Activated naive CD4-positive, alpha-beta T cell treated with anti-CD3 and anti-CD28 coated beads for 36 hours (primary cell): ENCODE measurements at regions of chr17 and their contacts with region 1.

Region 1: GRCh38 chr17:7484067-7484918 is at the start of gene POLR2A:
- DNase-seq: peak; percentile 95
- H3K4me3 Mint-ChIP-seq: peak within 1 kb of the TSS; percentile 93
- H3K27ac Mint-ChIP-seq: peak within 1 kb of the TSS; percentile 100
- H3K4me1 Mint-ChIP-seq: peaks cover 70% of the 10 kb centered on the region
- H3K27me3 Mint-ChIP-seq: no peaks in the 10 kb centered on the region
- total RNA-seq, gene POLR2A: 204 to 205 TPM

Region 2: DNA sequence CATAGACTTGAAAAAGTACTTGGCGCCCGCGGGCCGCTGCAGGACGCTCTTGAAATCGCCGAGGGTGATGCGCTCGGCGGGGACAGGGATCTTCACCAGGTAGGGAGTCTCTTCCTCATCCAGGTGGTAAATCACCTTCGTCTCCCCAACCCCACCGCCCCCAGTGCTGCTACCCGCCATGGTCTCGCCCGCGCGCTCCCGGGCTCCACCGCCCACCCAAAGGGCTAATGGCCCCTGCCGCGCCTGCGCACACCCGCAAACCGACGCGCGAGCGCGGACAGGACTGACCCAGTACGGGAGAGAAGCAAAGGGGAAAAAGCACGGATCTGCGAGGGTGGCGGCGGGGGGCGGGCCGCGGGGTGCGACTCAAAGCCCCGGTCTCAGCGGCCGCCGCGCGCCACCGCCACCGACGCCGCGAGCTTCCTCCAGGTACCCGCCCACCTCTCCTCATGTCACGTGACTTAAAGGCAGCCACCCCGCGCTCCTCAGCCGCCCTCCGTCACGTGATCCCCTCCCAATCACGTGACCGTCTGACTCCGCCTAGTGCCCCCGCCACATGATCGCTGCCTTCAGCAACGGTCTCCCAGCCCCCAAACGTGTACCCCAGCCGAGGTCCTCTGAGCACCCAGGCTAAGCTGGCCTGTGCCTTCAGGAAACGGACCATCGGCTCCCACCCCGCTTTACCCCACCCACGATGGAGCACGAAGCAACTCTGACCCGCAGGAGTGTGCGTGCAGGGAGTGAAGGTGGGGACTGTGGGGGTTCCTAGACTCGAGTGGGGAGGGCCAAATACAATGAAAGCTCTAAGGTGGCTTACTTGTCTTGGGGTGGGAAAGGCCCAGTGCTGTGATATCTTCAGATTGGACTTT is 250.0 kb before region 1 on chr17 and contains the start of gene DVL2:
- CTCF ChIA-PET with region 1: no interaction called
- intact Hi-C with region 1: loop called (anchors 2 kb)
- DNase-seq: peak; percentile 96
- H3K4me3 Mint-ChIP-seq: peak within 1 kb of the TSS; percentile 90
- H3K27ac Mint-ChIP-seq: peak within 1 kb of the TSS; percentile 88
- H3K4me1 Mint-ChIP-seq: peaks cover 52% of the 10 kb centered on the region
- H3K27me3 Mint-ChIP-seq: no peaks in the 10 kb centered on the region
- total RNA-seq, gene DVL2: 26.7 to 29.4 TPM

Region 3: DNA sequence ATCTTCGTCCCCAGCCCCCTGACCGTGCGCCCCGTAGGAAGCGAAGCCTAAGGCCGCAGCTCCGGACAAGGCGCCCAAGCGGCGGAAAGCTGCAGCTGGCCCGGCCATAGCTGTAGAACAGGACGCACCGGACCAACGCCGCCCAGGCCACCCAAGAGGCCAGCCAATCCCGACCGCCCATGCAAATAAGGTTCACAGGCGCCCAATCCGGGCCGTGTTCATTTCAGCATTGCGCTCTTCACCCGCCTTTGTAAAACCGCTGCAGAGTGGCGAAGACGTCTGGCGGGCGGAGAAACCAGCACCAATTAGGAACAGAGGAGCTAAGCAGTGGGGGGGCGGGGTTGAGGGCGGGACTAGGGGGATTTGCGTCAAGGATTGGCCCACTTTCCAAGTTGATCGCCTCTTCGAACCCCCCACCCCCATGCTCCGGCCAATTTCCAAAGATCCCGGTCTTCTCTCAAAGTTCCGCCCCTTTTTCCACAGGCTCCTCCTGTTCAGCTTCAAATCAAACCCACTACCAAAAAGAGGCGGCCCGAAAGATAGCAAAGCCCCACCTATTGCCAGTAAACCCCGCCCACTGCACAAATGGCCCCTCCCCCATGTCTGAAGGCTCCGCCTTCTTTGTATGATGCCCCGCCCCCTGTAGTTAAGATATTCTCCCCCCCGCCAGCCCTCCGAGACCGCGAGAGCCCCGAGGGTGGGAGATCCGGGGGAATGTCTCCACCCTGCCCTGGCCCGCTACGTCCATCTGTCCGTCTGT is 80.1 kb before region 1 on chr17 and contains the start of gene TMEM256:
- CTCF ChIA-PET with region 1: no interaction called
- intact Hi-C with region 1: loop called (anchors 1 kb)
- DNase-seq: peak; percentile 99
- H3K4me3 Mint-ChIP-seq: peak within 1 kb of the TSS; percentile 93
- H3K27ac Mint-ChIP-seq: peak within 1 kb of the TSS; percentile 93
- H3K4me1 Mint-ChIP-seq: peaks cover 19% of the 10 kb centered on the region
- H3K27me3 Mint-ChIP-seq: peaks cover 2% of the 10 kb centered on the region
- total RNA-seq, gene TMEM256: 65.6 to 66.3 TPM

Region 4: DNA sequence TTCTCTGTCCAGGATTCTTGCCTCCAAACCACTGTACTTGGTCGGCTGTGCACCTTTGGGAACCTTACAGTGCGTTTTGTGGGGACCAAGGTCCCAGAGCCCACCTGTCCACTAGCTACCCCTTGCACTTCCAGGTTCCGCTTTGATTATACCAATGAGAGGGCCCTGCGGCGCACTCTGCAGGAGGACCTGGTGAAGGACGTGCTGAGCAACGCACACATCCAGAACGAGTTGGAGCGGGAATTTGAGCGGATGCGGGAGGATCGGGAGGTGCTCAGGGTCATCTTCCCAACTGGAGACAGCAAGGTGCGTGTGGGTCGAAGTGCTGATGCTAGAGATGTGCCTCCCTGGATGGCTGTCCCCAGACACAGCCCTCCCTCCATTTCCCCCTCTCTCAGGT is 18.7 kb after region 1 on chr17:
- CTCF ChIA-PET with region 1: interaction called, 4 read pairs
- intact Hi-C with region 1: loop called (anchors 2 kb)
- DNase-seq: peak; percentile 19
- H3K4me3 Mint-ChIP-seq: no peak overlapping the region
- H3K27ac Mint-ChIP-seq: no peak overlapping the region
- H3K4me1 Mint-ChIP-seq: no peaks in the 10 kb centered on the region
- H3K27me3 Mint-ChIP-seq: no peaks in the 10 kb centered on the region

Region 5: DNA sequence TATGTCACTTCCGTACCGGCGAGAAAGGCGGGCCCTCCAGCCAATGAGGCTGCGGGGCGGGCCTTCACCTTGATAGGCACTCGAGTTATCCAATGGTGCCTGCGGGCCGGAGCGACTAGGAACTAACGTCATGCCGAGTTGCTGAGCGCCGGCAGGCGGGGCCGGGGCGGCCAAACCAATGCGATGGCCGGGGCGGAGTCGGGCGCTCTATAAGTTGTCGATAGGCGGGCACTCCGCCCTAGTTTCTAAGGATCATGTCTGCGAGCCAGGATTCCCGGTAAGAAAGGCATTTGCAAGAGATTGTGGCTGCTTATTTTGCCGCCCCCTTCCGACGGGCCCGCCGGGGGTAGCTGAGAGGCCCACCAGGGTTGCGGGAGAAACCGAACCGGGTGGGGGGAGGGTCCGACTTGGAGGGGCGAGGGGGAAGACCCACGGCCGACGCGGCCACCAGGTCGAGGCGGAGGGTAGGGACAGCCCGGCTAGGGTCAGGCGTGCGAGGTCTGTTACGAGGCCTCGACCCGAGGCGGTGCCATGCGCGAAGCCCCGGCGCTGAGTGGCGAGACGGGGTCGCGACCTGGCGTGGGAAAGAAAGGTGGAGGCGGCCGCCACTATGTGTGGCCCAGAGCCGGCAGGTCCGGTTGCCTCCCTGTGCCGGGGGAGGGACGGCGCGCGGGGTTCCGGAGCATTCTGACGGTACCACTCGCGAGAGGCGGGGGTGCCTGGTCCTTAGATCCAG is 88.5 kb after region 1 on chr17:
- CTCF ChIA-PET with region 1: no interaction called
- intact Hi-C with region 1: loop called (anchors 1 kb)
- DNase-seq: peak; percentile 100
- H3K4me3 Mint-ChIP-seq: peak overlapping the region; percentile 85
- H3K27ac Mint-ChIP-seq: peak overlapping the region; percentile 99
- H3K4me1 Mint-ChIP-seq: peaks cover 55% of the 10 kb centered on the region
- H3K27me3 Mint-ChIP-seq: no peaks in the 10 kb centered on the region

Region 6: DNA sequence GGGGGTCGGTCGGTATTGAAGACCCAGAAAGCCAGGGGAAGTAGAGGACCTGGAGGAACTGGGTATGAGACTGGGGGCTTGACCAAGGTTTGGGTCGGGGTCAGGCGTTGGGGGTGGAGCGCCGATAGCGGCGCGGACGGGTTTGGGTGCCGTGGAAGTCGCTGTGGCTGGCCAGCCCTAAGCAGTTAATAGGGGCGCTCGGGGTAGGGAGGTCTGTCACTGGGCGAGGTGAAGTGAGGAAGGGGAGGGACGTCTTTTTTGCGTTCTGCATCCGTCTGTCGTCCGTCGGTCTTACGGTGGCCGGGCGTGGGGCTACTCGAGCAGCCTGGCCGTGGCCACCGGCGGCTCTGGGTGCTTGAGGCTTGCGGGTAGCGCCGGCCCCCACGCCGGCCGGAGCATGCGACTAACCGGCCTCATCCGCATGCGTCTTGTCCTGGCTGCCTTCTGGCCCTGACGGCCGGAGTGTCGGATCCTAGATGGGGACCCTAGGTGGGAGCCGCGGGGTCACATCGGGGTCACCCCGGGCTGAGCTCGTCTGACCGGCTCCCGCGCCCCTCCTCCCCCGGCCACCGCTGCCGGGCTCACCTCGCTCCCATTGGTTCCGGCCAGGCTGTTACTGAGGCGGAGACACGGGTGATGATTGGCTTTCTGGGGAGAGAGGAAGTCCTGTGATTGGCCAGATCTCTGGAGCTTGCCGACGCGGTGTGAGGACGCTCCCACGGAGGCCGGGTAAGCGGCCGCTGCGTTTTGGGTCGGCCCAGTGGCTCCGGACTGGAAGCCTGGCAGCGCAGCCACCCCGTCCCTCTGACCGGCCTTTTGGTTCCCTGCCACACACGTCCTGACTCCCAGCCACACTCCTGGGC is 360.2 kb after region 1 on chr17:
- CTCF ChIA-PET with region 1: no interaction called
- intact Hi-C with region 1: loop called (anchors 1 kb)
- DNase-seq: peak; percentile 90
- H3K4me3 Mint-ChIP-seq: peak overlapping the region; percentile 89
- H3K27ac Mint-ChIP-seq: peak overlapping the region; percentile 99
- H3K4me1 Mint-ChIP-seq: peaks cover 46% of the 10 kb centered on the region
- H3K27me3 Mint-ChIP-seq: no peaks in the 10 kb centered on the region